Activated CD8-positive, alpha-beta T cell treated with anti-CD3 and anti-CD28 coated beads for 36 hours (primary cell): ENCODE measurements at regions of chr5 and their contacts with region 1.

Region 1: GRCh38 chr5:34929150-34929719 is at the start of gene DNAJC21:
- DNase-seq: peak; percentile 99
- ATAC-seq: peak; percentile 96
- H3K4me3 Mint-ChIP-seq: peak within 1 kb of the TSS; percentile 94
- H3K27ac Mint-ChIP-seq: peak within 1 kb of the TSS; percentile 97
- H3K4me1 Mint-ChIP-seq: peaks cover 48% of the 10 kb centered on the region
- H3K27me3 Mint-ChIP-seq: no peaks in the 10 kb centered on the region
- CTCF ChIP-seq: no peak
- total RNA-seq, gene DNAJC21: 48.3 to 51.8 TPM

Region 2: DNA sequence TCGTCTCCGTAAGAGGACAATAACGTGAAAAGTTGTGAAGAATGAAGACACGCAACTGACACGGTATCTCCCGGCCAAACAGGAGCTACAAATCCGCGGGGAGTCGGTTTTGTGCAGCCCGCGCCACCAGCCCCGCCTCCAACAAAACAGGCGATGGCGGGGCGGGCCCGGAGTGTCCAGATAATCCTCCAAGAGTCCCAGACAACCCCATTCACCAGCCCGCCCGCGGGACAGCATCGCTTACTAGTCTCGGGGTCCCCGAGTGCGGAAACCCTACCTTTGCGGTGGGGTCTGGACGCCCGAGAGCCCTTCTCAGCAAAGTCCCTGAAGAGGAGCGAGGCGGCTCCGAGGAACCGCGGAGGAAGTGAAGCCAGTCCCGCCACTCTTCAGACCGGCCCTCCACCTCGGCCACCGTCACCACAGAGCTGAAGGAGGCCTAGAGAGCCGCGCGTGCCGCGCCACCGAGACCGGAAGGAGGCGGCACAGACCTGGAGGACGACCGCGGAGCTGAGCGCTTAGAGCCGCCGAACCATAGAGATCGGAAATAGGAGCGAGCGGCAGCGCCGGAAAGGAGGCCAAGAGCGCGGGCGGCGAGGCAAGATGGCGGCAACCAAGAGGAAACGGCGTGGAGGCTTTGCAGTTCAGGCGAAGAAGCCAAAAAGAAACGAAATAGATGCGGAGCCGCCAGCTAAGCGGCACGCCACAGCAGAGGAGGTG is 13.9 kb before region 1 on chr5 and contains the starts of genes BRIX1 and RAD1:
- CTCF ChIA-PET with region 1: interaction called, 13 read pairs
- POLR2A ChIA-PET with region 1: interaction called, 70 read pairs
- intact Hi-C with region 1: no loop called
- DNase-seq: peak; percentile 97
- ATAC-seq: peak; percentile 97
- H3K4me3 Mint-ChIP-seq: no peak within 1 kb of the TSS
- H3K27ac Mint-ChIP-seq: peak within 1 kb of the TSS; percentile 31
- H3K4me1 Mint-ChIP-seq: peaks cover 26% of the 10 kb centered on the region
- H3K27me3 Mint-ChIP-seq: no peaks in the 10 kb centered on the region
- CTCF ChIP-seq: no peak
- total RNA-seq, gene BRIX1: 77.3 to 78.8 TPM
- total RNA-seq, gene RAD1: 37.9 to 39.2 TPM

Region 3: DNA sequence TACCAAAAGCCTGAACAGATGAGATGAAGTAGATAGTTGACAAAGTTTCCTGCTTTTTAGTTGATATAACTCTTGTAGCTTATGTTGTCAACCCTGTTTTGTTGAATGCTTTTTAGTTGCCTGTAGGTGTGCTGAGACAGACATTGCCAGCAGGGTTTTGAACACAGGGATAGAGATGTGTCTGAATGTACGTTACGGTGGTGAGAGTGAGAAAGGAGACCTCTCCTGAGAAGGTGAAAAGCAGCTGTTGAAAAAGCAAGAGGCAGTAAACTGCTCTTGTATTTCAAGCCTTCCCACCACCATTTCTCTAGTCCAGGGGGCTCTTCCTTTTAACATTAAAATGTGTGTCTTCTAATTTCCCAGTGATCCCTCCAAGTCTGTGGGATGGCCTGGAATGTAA is 14.8 kb after region 1 on chr5:
- CTCF ChIA-PET with region 1: no interaction called
- POLR2A ChIA-PET with region 1: interaction called, 11 read pairs
- intact Hi-C with region 1: no loop called
- DNase-seq: no peak
- ATAC-seq: no peak
- H3K4me3 Mint-ChIP-seq: no peak overlapping the region
- H3K27ac Mint-ChIP-seq: no peak overlapping the region
- H3K4me1 Mint-ChIP-seq: no peaks in the 10 kb centered on the region
- H3K27me3 Mint-ChIP-seq: no peaks in the 10 kb centered on the region
- CTCF ChIP-seq: no peak

Region 4: GRCh38 chr5:34977934-34978613 is 48.8 kb after region 1 on chr5:
- CTCF ChIA-PET with region 1: no interaction called
- POLR2A ChIA-PET with region 1: no interaction called
- intact Hi-C with region 1: no loop called
- DNase-seq: no peak
- ATAC-seq: no peak
- H3K4me3 Mint-ChIP-seq: no peak overlapping the region
- H3K27ac Mint-ChIP-seq: no peak overlapping the region
- H3K4me1 Mint-ChIP-seq: no peaks in the 10 kb centered on the region
- H3K27me3 Mint-ChIP-seq: peaks cover 6% of the 10 kb centered on the region
- CTCF ChIP-seq: no peak

Region 5: GRCh38 chr5:35416217-35416988 is 487.2 kb after region 1 on chr5:
- CTCF ChIA-PET with region 1: no interaction called
- POLR2A ChIA-PET with region 1: no interaction called
- intact Hi-C with region 1: no loop called
- DNase-seq: no peak
- ATAC-seq: no peak
- H3K4me3 Mint-ChIP-seq: no peak overlapping the region
- H3K27ac Mint-ChIP-seq: no peak overlapping the region
- H3K4me1 Mint-ChIP-seq: no peaks in the 10 kb centered on the region
- H3K27me3 Mint-ChIP-seq: peaks cover 6% of the 10 kb centered on the region
- CTCF ChIP-seq: no peak